ENCODE measurements at regions of chr1 and their contacts with region 1.

Region 1: DNA sequence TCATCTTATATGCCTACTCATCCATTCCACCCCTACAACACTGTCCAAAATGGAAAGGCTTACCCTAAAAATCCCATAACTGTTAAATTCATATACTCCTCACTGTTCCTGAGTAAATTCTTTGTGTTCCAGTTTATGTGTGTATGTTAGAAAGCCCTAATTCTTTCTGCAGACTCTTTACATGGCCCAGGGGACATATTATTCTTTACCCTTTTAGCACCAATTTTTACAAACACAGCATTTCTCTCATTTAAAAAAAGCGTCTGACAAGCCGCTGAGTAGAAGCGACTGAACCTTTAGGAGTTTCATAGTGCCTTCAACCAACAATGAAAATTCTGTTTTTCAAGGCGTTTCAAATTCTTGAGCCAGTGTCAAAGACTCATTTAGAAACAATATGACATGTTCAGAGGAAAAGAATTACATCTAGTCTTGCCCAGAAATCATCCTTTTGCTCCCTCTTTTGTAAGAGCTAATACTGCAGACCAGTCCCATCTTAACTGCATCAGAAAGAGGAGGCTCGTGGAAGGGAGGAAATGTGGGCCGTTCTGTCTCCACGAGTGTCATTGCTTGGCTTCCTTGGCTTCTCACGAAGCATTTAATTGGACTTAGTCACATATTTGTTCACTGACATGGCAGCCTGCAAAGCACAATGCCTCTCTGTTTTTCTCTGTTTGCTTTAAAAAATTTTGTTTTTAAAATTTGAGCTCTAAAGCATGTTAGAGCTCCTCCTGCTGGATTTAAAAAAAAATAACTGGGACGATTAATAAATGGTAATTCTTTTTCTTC is 21.3 kb upstream of the C1orf105 start:
- DNase-seq: peak; percentile 43 to 72
- H3K4me3 ChIP-seq: no peak overlapping the region
- H3K27ac ChIP-seq: no peak overlapping the region
- H3K4me1 ChIP-seq: no peaks in the 10 kb centered on the region
- H3K27me3 ChIP-seq: no peaks in the 10 kb centered on the region
- CTCF ChIP-seq: peak; percentile 84

Region 2: GRCh38 chr1:171141688-171142415 is 1257.3 kb before region 1 on chr1:
- CTCF ChIA-PET with region 1: no interaction called
- POLR2A ChIA-PET with region 1: no interaction called
- intact Hi-C with region 1: no loop called
- DNase-seq: no peak
- H3K4me3 ChIP-seq: no peak overlapping the region
- H3K27ac ChIP-seq: no peak overlapping the region
- H3K4me1 ChIP-seq: no peaks in the 10 kb centered on the region
- H3K27me3 ChIP-seq: peaks cover 3% of the 10 kb centered on the region; the same call in 1 of the 2 replicates
- CTCF ChIP-seq: no peak

Region 3: GRCh38 chr1:171984850-171985485 is 414.2 kb before region 1 on chr1:
- CTCF ChIA-PET with region 1: no interaction called
- POLR2A ChIA-PET with region 1: no interaction called
- intact Hi-C with region 1: loop called (anchors 1 kb)
- DNase-seq: peak in 1 of 2 experiments; percentile 38
- H3K4me3 ChIP-seq: no peak overlapping the region
- H3K27ac ChIP-seq: no peak overlapping the region
- H3K4me1 ChIP-seq: no peaks in the 10 kb centered on the region
- H3K27me3 ChIP-seq: no peaks in the 10 kb centered on the region
- CTCF ChIP-seq: peak; percentile 82

Region 4: GRCh38 chr1:172041742-172042141 is 357.4 kb before region 1 on chr1:
- CTCF ChIA-PET with region 1: no interaction called
- POLR2A ChIA-PET with region 1: no interaction called
- intact Hi-C with region 1: loop called (anchors 1 kb)
- DNase-seq: no peak
- H3K4me3 ChIP-seq: no peak overlapping the region
- H3K27ac ChIP-seq: no peak overlapping the region
- H3K4me1 ChIP-seq: 0 out of 2 replicates have a peak, but pooled peaks cover 7% of the 10 kb centered on the region
- H3K27me3 ChIP-seq: no peaks in the 10 kb centered on the region
- CTCF ChIP-seq: peak; percentile 57

Region 5: DNA sequence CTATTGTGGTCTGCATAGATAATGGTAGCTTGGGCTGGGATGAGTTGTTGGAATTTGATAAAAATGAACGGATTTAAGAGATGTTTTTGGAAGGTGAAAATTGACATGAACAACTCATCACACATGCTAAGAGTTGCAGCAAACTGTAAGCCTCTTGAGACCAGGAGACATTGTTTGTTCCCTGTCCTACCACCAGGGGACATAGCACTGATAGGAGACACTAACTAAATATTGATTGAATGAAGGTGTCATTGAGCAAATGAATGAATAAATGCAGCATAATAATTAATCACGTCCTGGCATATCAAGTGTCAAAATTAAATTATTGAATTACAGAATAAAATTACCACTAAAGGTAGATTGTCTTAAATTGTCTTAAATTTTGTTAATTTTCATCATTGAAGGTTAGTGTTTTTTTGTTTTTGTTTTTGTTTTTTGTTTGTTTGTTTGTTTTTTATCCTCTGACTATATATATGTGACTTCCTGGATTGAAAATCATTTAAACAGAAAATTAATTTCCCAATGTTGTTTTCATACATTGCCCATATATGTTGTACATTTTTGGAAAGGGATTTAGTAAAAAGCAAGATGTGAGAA is 264.0 kb before region 1 on chr1:
- CTCF ChIA-PET with region 1: interaction called, 4 read pairs
- POLR2A ChIA-PET with region 1: no interaction called
- intact Hi-C with region 1: loop called (anchors 2 kb)
- DNase-seq: no peak
- H3K4me3 ChIP-seq: no peak overlapping the region
- H3K27ac ChIP-seq: no peak overlapping the region
- H3K4me1 ChIP-seq: no peaks in the 10 kb centered on the region
- H3K27me3 ChIP-seq: no peaks in the 10 kb centered on the region
- CTCF ChIP-seq: peak; percentile 65

Region 6: GRCh38 chr1:172357753-172358385 is 41.3 kb before region 1 on chr1:
- CTCF ChIA-PET with region 1: interaction called, 4 read pairs
- POLR2A ChIA-PET with region 1: interaction called, 3 read pairs
- intact Hi-C with region 1: loop called (anchors 2 kb)
- DNase-seq: no peak
- H3K4me3 ChIP-seq: no peak overlapping the region
- H3K27ac ChIP-seq: peak overlapping the region; percentile 72
- H3K4me1 ChIP-seq: peaks cover 60% of the 10 kb centered on the region
- H3K27me3 ChIP-seq: no peaks in the 10 kb centered on the region
- CTCF ChIP-seq: no peak

Region 7: DNA sequence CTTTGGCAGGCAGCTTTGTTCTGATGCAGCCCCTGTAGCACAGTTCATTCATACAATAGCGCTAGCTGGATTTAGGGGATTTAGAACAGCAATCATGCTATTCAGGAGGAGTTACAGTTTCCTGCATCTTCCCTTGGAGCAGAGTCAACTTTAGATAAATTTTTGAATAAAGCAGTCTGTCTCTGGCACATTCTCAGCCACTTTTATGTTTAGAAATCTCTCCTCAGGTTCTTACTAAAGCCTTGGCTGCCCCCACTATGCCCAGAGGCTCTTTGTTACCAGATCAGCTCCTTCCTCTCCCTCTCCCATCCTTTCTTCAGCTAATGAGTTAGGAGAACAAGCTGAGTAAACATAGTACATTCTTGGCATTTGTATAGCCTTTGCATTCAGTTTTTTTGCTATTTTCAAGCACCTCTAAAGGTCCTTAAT is 61.7 kb after region 1 on chr1:
- CTCF ChIA-PET with region 1: no interaction called
- POLR2A ChIA-PET with region 1: no interaction called
- intact Hi-C with region 1: no loop called
- DNase-seq: peak in 1 of 2 experiments; percentile 75
- H3K4me3 ChIP-seq: no peak overlapping the region
- H3K27ac ChIP-seq: no peak overlapping the region; the same call in 1 of the 2 replicates
- H3K4me1 ChIP-seq: peaks cover 20% of the 10 kb centered on the region
- H3K27me3 ChIP-seq: no peaks in the 10 kb centered on the region
- CTCF ChIP-seq: no peak

Region 8: DNA sequence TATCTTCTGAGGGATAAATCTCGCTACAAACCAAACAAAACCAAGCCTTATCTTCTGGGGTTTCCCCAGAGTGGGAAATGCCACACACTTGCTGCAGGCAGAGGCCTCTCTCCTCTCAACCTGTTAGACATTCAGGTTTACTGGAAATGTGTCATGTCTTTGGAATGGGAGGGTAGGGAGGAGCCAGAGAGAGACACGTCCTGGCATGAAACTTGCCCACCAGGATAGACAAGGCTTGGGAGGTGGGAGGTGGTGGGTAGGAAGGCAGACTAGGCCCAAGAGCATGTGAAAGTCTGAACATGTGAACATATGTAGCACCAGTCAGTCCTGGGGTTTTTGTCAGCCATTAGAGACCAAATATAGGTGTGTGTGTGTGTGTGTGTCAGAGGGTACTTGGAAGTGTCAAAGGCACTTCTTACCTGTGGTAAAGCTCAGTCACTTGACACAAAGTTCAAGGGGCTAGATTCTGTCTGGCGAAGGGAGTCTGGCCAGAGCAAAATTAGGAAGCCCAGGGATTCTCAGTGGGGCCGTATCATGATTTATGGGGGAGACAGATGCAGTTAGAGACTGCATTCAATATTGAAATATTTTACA is 77.2 kb after region 1 on chr1:
- CTCF ChIA-PET with region 1: no interaction called
- POLR2A ChIA-PET with region 1: no interaction called
- intact Hi-C with region 1: no loop called
- DNase-seq: peak; percentile 69 to 86
- H3K4me3 ChIP-seq: no peak overlapping the region
- H3K27ac ChIP-seq: peak overlapping the region; percentile 54
- H3K4me1 ChIP-seq: peaks cover 31% of the 10 kb centered on the region
- H3K27me3 ChIP-seq: no peaks in the 10 kb centered on the region
- CTCF ChIP-seq: no peak

Region 9: GRCh38 chr1:172547071-172547470 is 147.9 kb after region 1 on chr1:
- CTCF ChIA-PET with region 1: no interaction called
- POLR2A ChIA-PET with region 1: no interaction called
- intact Hi-C with region 1: no loop called
- DNase-seq: no peak
- H3K4me3 ChIP-seq: no peak overlapping the region
- H3K27ac ChIP-seq: no peak overlapping the region
- H3K4me1 ChIP-seq: peaks cover 19% of the 10 kb centered on the region
- H3K27me3 ChIP-seq: no peaks in the 10 kb centered on the region
- CTCF ChIP-seq: no peak

Measured in PC-9 (cell line).